Esophagus muscularis mucosa (tissue), 4 donors: ENCODE measurements at regions of chr7 and their contacts with region 1.

Region 1: DNA sequence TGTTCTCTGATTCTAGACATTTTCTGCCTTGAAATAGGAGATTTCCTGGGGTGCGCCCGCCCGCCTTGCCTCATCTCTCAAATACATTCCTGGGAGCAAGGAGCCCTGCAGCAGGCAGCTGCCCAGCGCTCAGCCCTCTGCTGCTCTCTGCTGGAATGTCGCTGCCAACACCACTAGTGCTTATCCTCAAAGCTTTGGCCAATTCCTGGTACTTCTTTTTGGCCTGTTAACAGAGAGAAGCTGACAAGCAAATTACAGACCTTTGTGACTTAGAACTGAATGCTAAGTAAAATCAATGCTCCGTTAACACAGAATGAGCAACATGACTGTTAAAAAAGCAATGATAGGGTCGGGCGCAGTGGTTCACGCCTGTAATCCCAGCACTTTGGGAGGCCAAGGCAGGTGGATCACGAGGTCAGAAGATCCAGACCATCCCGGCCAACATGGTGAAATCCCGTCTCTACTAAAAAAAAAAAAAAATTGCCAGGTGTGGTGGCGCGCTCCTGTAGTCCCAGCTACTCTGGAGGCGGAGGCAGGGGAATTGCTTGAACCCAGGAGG is 41.9 kb upstream of the SYPL1 start:
- DNase-seq: peak; percentile 91
- H3K4me3 ChIP-seq: peak overlapping the region in 2 of 4 donors; percentile 5 to 14
- H3K27ac ChIP-seq: no peak overlapping the region
- H3K4me1 ChIP-seq: peaks cover 8 to 15% (median 15%) of the 10 kb centered on the region in 4 donors
- H3K27me3 ChIP-seq: no peaks in the 10 kb centered on the region
- CTCF ChIP-seq: peak; percentile 94 to 97 (median 97)
- EP300 ChIP-seq: no peak
- POLR2A ChIP-seq: no peak

Region 2: DNA sequence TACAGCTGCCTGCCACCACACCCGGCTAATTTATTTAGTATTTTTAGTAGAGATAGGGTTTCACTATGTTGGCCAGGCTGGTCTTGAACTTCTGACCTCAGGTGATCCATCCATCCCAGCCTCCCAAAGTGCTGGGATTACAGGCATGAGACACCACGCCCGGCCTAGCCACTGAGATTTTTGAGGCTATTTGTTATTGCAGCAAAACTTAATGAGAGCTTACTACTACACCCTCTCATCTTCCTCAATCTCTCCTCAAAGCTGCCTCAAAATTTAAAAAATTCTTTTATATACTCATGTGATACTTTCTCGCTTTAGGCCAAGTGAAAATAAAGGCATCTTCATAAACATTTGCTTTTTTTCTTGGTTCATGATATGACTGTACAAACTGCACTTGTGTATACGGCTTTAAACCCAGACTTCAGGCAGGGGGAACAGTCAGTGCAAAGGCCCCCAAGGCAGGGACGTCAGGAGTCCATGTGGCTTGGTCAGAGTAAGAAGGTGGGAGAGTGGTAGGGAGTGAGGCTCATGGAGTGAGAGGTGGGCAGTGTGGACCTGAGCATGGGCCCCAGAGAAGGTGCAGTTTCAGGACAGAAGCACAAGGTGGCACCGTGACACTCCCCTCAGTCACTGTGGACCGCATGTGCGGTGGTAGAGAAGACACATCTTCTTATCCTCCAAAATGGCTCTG is 97.3 kb before region 1 on chr7:
- intact Hi-C with region 1: loop called (anchors 1 kb)
- DNase-seq: no peak
- H3K4me3 ChIP-seq: no peak overlapping the region
- H3K27ac ChIP-seq: no peak overlapping the region
- H3K4me1 ChIP-seq: peaks cover 4 to 29% (median 24%) of the 10 kb centered on the region in 4 donors
- H3K27me3 ChIP-seq: no peaks in the 10 kb centered on the region
- CTCF ChIP-seq: peak; percentile 90 to 92 (median 90)
- EP300 ChIP-seq: no peak
- POLR2A ChIP-seq: no peak

Region 3: GRCh38 chr7:106112117-106112971 is 41.6 kb before region 1 on chr7 and contains the start of gene SYPL1:
- intact Hi-C with region 1: loop called (anchors 10 kb)
- DNase-seq: peak; percentile 98
- H3K4me3 ChIP-seq: peak within 1 kb of the TSS; percentile 76 to 85 (median 81)
- H3K27ac ChIP-seq: peak within 1 kb of the TSS; percentile 98 to 99 (median 98)
- H3K4me1 ChIP-seq: peaks cover 34 to 73% (median 71%) of the 10 kb centered on the region in 4 donors
- H3K27me3 ChIP-seq: no peaks in the 10 kb centered on the region
- CTCF ChIP-seq: peak in 1 of 3 experiments; percentile 13
- EP300 ChIP-seq: no peak
- POLR2A ChIP-seq: peak; percentile 24
- total RNA-seq, gene SYPL1: 83.6 to 135 (median 90.8) TPM

Region 4: GRCh38 chr7:106122713-106123112 is 31.3 kb before region 1 on chr7:
- intact Hi-C with region 1: no loop called
- DNase-seq: no peak
- H3K4me3 ChIP-seq: no peak overlapping the region
- H3K27ac ChIP-seq: no peak overlapping the region
- H3K4me1 ChIP-seq: peaks cover 30 to 56% (median 41%) of the 10 kb centered on the region in 4 donors
- H3K27me3 ChIP-seq: no peaks in the 10 kb centered on the region
- CTCF ChIP-seq: no peak
- EP300 ChIP-seq: no peak
- POLR2A ChIP-seq: no peak

Region 5: GRCh38 chr7:106358103-106358663 is 204.2 kb after region 1 on chr7:
- intact Hi-C with region 1: no loop called
- DNase-seq: no peak
- H3K4me3 ChIP-seq: no peak overlapping the region
- H3K27ac ChIP-seq: no peak overlapping the region
- H3K4me1 ChIP-seq: no peaks in the 10 kb centered on the region
- H3K27me3 ChIP-seq: no peaks in the 10 kb centered on the region
- CTCF ChIP-seq: no peak
- EP300 ChIP-seq: no peak
- POLR2A ChIP-seq: no peak